WTC11 (cell line): ENCODE measurements at regions of chr19 and their contacts with region 1.

Region 1: DNA sequence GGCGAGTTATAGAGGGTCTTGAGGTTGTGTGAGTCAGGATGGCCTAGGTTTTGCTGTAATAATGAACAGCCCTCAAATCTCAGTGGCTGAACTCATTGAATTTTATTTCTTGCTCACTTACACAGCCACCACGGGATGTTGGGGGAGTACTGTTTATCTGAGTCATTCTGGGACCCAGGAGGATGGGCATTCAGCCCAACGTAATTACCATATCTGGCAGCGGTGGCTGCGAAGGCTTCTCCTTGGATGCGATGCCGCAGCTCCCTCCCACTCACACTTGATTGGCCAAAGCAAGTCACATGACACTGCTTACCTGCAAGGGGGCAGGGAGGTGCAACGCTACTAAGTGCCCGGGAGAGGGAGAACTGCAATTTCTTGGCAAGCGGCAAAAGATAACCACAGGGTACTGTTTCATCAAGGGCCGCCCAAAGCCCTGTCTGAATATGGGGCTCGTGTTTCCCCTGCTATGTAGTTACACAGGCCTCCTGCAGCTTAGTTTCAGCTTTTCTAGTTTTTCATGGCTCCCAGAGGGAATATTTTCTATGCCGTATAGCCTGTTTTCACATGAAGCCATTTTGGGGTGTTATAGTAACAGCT is 19.9 kb downstream of the ZSWIM9 start:
- DNase-seq: peak; percentile 88
- ATAC-seq: peak; percentile 94
- H3K4me3 Mint-ChIP-seq: peak overlapping the region; percentile 29; the same call in 1 of the 2 replicates
- H3K27ac Mint-ChIP-seq: peak overlapping the region; percentile 36; the same call in 1 of the 2 replicates
- H3K4me1 Mint-ChIP-seq: peaks cover 19% of the 10 kb centered on the region
- H3K27me3 Mint-ChIP-seq: peaks cover 5% of the 10 kb centered on the region
- CTCF ChIP-seq: peak; percentile 45; the same call in 1 of the 2 replicates

Region 2: GRCh38 chr19:48170038-48170812 is 20.2 kb before region 1 on chr19 and contains the starts of genes LIG1 and ZSWIM9:
- CTCF ChIA-PET with region 1: interaction called, 29 read pairs
- POLR2A ChIA-PET with region 1: interaction called, 6 read pairs
- DNase-seq: peak; percentile 91
- ATAC-seq: peak; percentile 82
- H3K4me3 Mint-ChIP-seq: peak within 1 kb of the TSS; percentile 91
- H3K27ac Mint-ChIP-seq: peak within 1 kb of the TSS; percentile 99
- H3K4me1 Mint-ChIP-seq: peaks cover 16% of the 10 kb centered on the region
- H3K27me3 Mint-ChIP-seq: no peaks in the 10 kb centered on the region
- CTCF ChIP-seq: no peak
- total RNA-seq, gene LIG1: 99.8 to 119 TPM (median 102 TPM) in 3 replicates
- total RNA-seq, gene ZSWIM9: 12.8 to 15.9 TPM (median 15.7 TPM) in 3 replicates

Region 3: DNA sequence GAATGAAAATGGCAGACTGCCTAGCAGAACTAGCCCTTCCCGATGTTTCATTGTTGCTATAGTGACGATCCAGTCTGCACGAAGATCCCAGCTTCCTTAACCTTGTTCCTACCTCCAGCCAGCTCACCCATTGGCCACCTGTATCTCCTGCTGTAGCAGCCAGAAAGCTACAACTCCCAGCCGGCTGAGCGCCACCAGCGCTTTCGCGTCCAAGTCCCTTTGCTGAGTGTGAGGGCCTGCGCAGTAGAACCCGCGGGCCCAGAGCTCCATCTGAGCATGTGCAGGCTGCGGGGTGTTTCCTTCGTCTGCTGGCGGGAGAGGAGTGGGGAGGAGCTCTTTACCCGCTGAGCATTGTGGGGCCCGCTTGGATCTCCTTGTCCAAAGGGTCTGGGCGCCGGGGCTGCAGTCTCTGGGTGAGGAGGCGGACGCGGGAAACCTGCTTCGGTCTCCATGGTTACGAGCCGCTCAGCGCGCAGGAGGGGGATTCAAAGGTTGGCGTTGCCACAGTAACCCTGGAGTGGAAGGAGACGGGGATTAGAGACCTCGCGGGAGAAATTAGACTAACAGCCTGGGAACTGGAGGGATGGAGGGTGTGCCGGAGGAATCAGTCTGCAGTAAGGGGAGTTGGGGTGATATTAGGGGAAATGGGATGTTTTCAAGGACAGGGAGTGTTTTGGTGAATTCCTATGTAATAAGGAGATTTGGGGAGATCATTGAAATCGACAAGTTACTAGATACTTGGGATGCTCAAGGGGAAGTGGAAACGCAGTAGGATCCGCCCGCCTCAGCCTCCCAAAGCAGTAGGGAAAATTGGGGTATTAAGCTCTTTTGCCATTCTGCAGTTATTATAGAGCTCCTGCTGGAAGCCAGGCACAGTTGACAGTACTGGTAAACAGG is 13.6 kb after region 1 on chr19:
- CTCF ChIA-PET with region 1: interaction called, 57 read pairs
- POLR2A ChIA-PET with region 1: interaction called, 9 read pairs
- DNase-seq: peak; percentile 98
- ATAC-seq: peak; percentile 98
- H3K4me3 Mint-ChIP-seq: no peak overlapping the region
- H3K27ac Mint-ChIP-seq: no peak overlapping the region
- H3K4me1 Mint-ChIP-seq: no peaks in the 10 kb centered on the region
- H3K27me3 Mint-ChIP-seq: no peaks in the 10 kb centered on the region; the same call in 1 of the 2 replicates
- CTCF ChIP-seq: no peak

Region 4: GRCh38 chr19:48216933-48217332 is 26.5 kb after region 1 on chr19:
- CTCF ChIA-PET with region 1: interaction called, 14 read pairs
- POLR2A ChIA-PET with region 1: no interaction called
- DNase-seq: peak; percentile 71
- ATAC-seq: peak; percentile 84
- H3K4me3 Mint-ChIP-seq: no peak overlapping the region
- H3K27ac Mint-ChIP-seq: no peak overlapping the region
- H3K4me1 Mint-ChIP-seq: peaks cover 7% of the 10 kb centered on the region
- H3K27me3 Mint-ChIP-seq: no peaks in the 10 kb centered on the region
- CTCF ChIP-seq: peak; percentile 61

Region 5: GRCh38 chr19:48255376-48256303 is 65.3 kb after region 1 on chr19 and contains the start of gene CARD8:
- CTCF ChIA-PET with region 1: interaction called, 22 read pairs
- POLR2A ChIA-PET with region 1: no interaction called
- DNase-seq: peak; percentile 69
- ATAC-seq: peak; percentile 86
- H3K4me3 Mint-ChIP-seq: peak within 1 kb of the TSS; percentile 96
- H3K27ac Mint-ChIP-seq: peak within 1 kb of the TSS; percentile 98
- H3K4me1 Mint-ChIP-seq: peaks cover 11% of the 10 kb centered on the region
- H3K27me3 Mint-ChIP-seq: peaks cover 7% of the 10 kb centered on the region
- CTCF ChIP-seq: no peak
- total RNA-seq, gene CARD8: 23.0 to 31.1 TPM (median 29.8 TPM) in 3 replicates